T-cell (primary cell): ENCODE measurements at regions of chr21 and their contacts with region 1.

Region 1: DNA sequence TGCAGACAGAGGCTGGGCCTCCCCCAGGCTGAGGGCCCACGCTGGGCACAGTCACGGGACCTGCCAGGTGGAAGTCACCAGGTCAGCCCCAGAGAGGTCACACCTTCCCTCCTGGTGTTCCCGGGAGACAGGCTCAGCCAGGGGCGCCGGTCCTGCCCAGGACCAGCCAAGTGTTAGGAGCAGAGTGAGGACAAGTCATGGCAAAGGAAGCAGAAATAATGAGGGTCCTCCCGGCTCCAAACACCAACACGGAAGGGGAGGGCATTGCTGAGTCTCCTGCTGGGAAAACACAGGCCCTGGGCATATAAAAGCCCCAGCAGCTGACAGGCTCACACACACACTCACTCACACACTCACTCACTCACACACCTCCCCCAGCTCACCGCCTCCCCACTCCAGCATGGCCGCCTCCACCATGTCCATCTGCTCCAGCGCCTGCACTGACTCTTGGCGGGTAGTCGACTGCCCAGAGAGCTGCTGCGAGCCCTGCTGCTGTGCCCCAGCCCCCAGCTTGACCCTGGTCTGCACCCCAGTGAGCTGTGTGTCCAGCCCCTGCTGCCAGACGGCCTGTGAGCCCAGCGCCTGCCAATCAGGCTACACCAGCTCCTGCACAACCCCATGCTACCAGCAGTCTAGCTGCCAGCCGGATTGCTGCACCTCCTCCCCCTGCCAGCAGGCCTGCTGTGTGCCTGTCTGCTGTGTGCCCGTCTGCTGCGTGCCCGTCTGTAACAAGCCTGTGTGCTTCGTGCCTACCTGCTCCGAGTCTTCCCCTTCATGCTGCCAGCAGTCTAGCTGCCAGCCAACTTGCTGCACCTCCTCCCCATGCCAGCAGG is at the start of gene KRTAP10-10:
- DNase-seq: no peak
- ATAC-seq: no peak
- H3K4me3 ChIP-seq: no peak within 1 kb of the TSS
- H3K4me3 Mint-ChIP-seq: no peak within 1 kb of the TSS
- H3K27ac ChIP-seq: no peak within 1 kb of the TSS
- H3K27ac Mint-ChIP-seq: peak within 1 kb of the TSS in 1 of 2 donors; percentile 42
- H3K4me1 ChIP-seq: no peaks in the 10 kb centered on the region
- H3K4me1 Mint-ChIP-seq: no peaks in the 10 kb centered on the region
- H3K27me3 ChIP-seq: peaks cover 0 to 17% of the 10 kb centered on the region in 2 experiments
- H3K27me3 Mint-ChIP-seq: peaks cover 0 to 11% of the 10 kb centered on the region in 2 donors
- total RNA-seq, gene KRTAP10-10: not detected

Region 2: GRCh38 chr21:44626262-44626661 is 11.0 kb before region 1 on chr21:
- CTCF ChIA-PET with region 1: no interaction called
- POLR2A ChIA-PET with region 1: no interaction called
- DNase-seq: peak in 18 of 35 experiments; percentile 10 to 57 (median 22)
- ATAC-seq: peak in 1 of 4 experiments; percentile 54
- H3K4me3 ChIP-seq: no peak overlapping the region
- H3K4me3 Mint-ChIP-seq: peak overlapping the region in 1 of 3 donors; percentile 17
- H3K27ac ChIP-seq: no peak overlapping the region
- H3K27ac Mint-ChIP-seq: no peak overlapping the region
- H3K4me1 ChIP-seq: peaks cover 9 to 58% of the 10 kb centered on the region in 2 experiments
- H3K4me1 Mint-ChIP-seq: peaks cover 15 to 32% (median 31%) of the 10 kb centered on the region in 3 donors
- H3K27me3 ChIP-seq: no peaks in the 10 kb centered on the region
- H3K27me3 Mint-ChIP-seq: no peaks in the 10 kb centered on the region

Region 3: DNA sequence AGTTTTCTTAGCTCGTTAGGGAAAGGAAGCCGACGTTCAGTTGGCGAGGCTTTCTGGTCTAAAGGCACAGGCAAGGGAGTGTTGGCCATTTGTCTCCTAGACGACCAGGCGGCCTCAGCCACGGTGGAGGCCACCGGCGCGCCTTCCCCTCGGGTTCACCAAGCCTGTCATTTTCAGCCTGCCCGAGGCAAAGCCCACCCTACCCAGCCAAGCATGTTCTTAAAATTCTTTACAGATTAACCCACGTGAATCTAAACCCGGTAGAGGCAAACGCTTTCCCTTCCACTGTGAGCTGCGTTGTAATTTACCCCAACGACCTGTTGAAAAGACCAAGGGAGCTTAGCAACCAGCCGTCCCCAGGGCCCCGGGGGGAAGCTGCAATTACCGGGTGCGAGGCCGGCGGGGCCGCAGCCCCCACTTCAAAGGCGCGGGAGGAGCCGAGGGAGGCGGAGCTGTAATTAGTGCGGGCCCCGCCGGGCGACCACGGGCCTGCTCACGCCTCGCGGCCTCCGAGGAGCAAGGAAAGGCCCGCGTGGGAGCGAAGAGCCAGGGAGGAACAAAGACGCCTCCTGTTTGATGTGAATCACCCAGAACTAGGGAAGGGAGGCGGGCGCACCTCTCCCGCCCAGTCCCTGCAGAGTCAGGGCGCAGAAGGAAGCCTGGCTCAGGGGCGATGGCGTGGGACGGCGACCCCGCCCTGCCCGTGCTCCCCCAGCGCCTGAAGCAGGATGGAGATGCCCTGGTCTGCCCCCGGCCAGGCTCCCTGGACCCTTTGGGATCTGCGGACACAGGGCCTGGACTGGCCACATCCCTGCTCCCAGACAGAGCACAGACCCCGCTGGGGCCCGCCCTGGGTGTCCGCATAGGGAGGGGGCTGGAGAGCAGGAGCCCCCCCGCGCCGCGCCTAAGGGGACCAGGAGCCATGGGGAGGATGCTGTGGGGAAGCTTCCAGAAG is 86.2 kb after region 1 on chr21:
- CTCF ChIA-PET with region 1: no interaction called
- POLR2A ChIA-PET with region 1: interaction called in 1 of 2 experiments, 18 read pairs
- DNase-seq: peak in 11 of 35 experiments; percentile 9 to 44 (median 19)
- ATAC-seq: peak; percentile 23 to 70 (median 66)
- H3K4me3 ChIP-seq: peak overlapping the region; percentile 31 to 42
- H3K4me3 Mint-ChIP-seq: peak overlapping the region; percentile 64 to 80 (median 68)
- H3K27ac ChIP-seq: no peak overlapping the region
- H3K27ac Mint-ChIP-seq: no peak overlapping the region
- H3K4me1 ChIP-seq: peaks cover 0 to 17% of the 10 kb centered on the region in 2 experiments
- H3K4me1 Mint-ChIP-seq: peaks cover 11 to 14% (median 13%) of the 10 kb centered on the region in 3 donors
- H3K27me3 ChIP-seq: peaks cover 2 to 64% of the 10 kb centered on the region in 2 experiments
- H3K27me3 Mint-ChIP-seq: peaks cover 30 to 59% of the 10 kb centered on the region in 2 donors